CD4-positive, alpha-beta memory T cell (primary cell): ENCODE measurements at regions of chr2 and their contacts with region 1.

Region 1: GRCh38 chr2:178414266-178415247 is 36.4 kb downstream of the PRKRA start:
- DNase-seq: peak; percentile 61 to 79 (median 71)
- H3K4me3 ChIP-seq: peak overlapping the region; percentile 80 to 86
- H3K4me3 Mint-ChIP-seq: peak overlapping the region; percentile 86 to 97 (median 92)
- H3K27ac ChIP-seq: peak overlapping the region; percentile 69
- H3K27ac Mint-ChIP-seq: peak overlapping the region; percentile 87 to 99 (median 97)
- H3K4me1 ChIP-seq: peaks cover 15% of the 10 kb centered on the region
- H3K4me1 Mint-ChIP-seq: peaks cover 11 to 32% (median 19%) of the 10 kb centered on the region in 4 donors
- H3K27me3 ChIP-seq: no peaks in the 10 kb centered on the region
- H3K27me3 Mint-ChIP-seq: peaks cover 0 to 3% of the 10 kb centered on the region in 2 donors

Region 2: DNA sequence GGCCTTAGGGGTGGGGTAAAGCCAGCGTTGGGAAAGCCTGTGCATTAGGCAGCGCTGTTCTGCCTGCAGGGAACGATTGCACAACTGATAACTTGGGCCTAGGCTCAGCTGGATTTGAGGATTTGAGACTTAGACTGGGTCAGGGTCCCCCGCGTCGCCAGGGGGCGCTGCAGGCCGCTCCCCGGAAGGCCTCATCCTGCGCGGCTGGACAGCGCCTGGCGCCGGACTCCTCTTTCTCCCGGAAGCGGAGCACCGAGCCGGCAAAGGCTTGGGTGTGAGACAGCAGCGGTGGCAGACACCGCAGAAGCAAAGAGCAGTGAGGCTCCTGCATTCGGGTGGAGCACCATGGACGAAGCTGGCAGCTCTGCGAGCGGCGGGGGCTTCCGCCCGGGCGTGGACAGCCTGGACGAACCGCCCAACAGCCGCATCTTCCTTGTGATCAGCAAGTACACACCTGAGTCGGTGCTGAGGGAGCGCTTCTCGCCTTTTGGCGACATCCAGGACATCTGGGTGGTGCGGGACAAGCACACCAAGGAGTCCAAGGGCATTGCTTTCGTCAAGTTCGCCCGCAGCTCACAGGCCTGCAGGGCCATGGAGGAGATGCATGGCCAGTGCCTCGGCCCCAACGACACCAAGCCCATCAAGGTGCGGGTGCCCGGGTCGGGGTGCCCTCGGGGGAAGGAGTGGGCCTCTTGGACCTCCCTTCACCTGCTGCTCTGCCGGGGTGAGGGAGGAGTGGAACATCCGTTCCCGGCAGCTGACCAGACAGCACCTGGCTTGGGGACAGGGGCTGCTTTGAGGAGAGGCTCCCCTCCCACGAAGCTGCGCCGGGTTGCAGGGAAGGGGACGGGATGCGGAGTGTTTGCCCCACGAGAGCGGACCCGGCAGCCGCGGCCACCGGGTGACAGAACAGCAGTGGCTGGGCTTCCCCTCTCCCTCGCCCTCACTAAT is 302.1 kb before region 1 on chr2 and contains the start of gene RBM45:
- CTCF ChIA-PET with region 1: interaction called, 16 read pairs
- POLR2A ChIA-PET with region 1: interaction called, 3 read pairs
- intact Hi-C with region 1: loop called (anchors 1 kb)
- DNase-seq: peak; percentile 76 to 82 (median 82)
- H3K4me3 ChIP-seq: peak within 1 kb of the TSS; percentile 80 to 92
- H3K4me3 Mint-ChIP-seq: peak within 1 kb of the TSS; percentile 87 to 96 (median 91)
- H3K27ac ChIP-seq: peak within 1 kb of the TSS; percentile 66
- H3K27ac Mint-ChIP-seq: peak within 1 kb of the TSS; percentile 82 to 95 (median 90)
- H3K4me1 ChIP-seq: peaks cover 28% of the 10 kb centered on the region
- H3K4me1 Mint-ChIP-seq: peaks cover 28 to 47% (median 39%) of the 10 kb centered on the region in 4 donors
- H3K27me3 ChIP-seq: no peaks in the 10 kb centered on the region
- H3K27me3 Mint-ChIP-seq: no peaks in the 10 kb centered on the region
- total RNA-seq, gene RBM45: 23.3 to 28.0 TPM

Region 3: GRCh38 chr2:178345951-178346350 is 68.6 kb before region 1 on chr2:
- CTCF ChIA-PET with region 1: no interaction called
- POLR2A ChIA-PET with region 1: no interaction called
- intact Hi-C with region 1: no loop called
- DNase-seq: no peak
- H3K4me3 ChIP-seq: no peak overlapping the region
- H3K4me3 Mint-ChIP-seq: no peak overlapping the region
- H3K27ac ChIP-seq: no peak overlapping the region
- H3K27ac Mint-ChIP-seq: no peak overlapping the region
- H3K4me1 ChIP-seq: no peaks in the 10 kb centered on the region
- H3K4me1 Mint-ChIP-seq: no peaks in the 10 kb centered on the region
- H3K27me3 ChIP-seq: no peaks in the 10 kb centered on the region
- H3K27me3 Mint-ChIP-seq: peaks cover 24 to 32% of the 10 kb centered on the region in 2 donors

Region 4: DNA sequence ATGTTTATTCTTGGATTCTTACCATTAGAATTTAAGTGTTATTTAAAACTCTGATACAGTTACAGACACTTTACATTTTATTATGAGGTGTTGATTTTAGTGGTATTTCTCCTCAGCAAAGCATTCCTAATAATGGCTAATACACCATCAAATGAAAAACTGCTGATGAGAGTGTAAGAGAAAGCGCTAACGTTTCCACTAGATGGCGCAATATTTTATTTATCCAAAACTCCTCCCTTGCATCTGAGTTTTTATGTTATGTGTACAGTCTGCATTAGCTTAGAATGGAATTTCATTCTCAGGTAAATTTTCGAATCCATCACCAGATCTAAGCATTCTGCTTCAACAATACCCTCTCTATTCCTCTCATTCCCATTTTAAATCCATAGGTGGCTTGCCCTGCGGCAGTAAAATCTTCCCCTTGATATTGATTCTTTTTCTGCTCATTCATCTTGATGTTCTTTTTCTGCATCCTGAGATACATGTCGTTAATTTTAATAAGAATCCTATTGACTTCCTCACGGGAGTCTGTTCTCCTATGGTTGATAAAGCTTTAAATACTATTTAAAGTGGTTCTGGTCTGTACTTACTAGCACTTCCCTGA is 17.5 kb before region 1 on chr2:
- CTCF ChIA-PET with region 1: interaction called, 256 read pairs
- POLR2A ChIA-PET with region 1: interaction called, 9 read pairs
- intact Hi-C with region 1: loop called (anchors 1 kb)
- DNase-seq: peak in 4 of 5 donors; percentile 32 to 47 (median 37)
- H3K4me3 ChIP-seq: no peak overlapping the region
- H3K4me3 Mint-ChIP-seq: no peak overlapping the region
- H3K27ac ChIP-seq: no peak overlapping the region
- H3K27ac Mint-ChIP-seq: no peak overlapping the region
- H3K4me1 ChIP-seq: no peaks in the 10 kb centered on the region
- H3K4me1 Mint-ChIP-seq: no peaks in the 10 kb centered on the region
- H3K27me3 ChIP-seq: no peaks in the 10 kb centered on the region
- H3K27me3 Mint-ChIP-seq: peaks cover 0 to 3% of the 10 kb centered on the region in 2 donors

Region 5: GRCh38 chr2:178450774-178451525 is 36.4 kb after region 1 on chr2 and contains the starts of genes PJVK and PRKRA:
- CTCF ChIA-PET with region 1: interaction called, 42 read pairs
- POLR2A ChIA-PET with region 1: interaction called, 56 read pairs
- intact Hi-C with region 1: loop called (anchors 1 kb)
- DNase-seq: peak; percentile 93 to 95 (median 94)
- H3K4me3 ChIP-seq: peak within 1 kb of the TSS; percentile 40 to 76
- H3K4me3 Mint-ChIP-seq: peak within 1 kb of the TSS; percentile 87 to 93 (median 90)
- H3K27ac ChIP-seq: peak within 1 kb of the TSS; percentile 97
- H3K27ac Mint-ChIP-seq: peak within 1 kb of the TSS; percentile 94 to 97 (median 97)
- H3K4me1 ChIP-seq: peaks cover 32% of the 10 kb centered on the region
- H3K4me1 Mint-ChIP-seq: peaks cover 21 to 34% (median 27%) of the 10 kb centered on the region in 4 donors
- H3K27me3 ChIP-seq: no peaks in the 10 kb centered on the region
- H3K27me3 Mint-ChIP-seq: peaks cover 2 to 3% of the 10 kb centered on the region in 2 donors
- total RNA-seq, gene PJVK: 3.6 to 4.1 TPM
- total RNA-seq, gene PRKRA: 51.0 to 52.4 TPM

Region 6: GRCh38 chr2:178522950-178523595 is 108.5 kb after region 1 on chr2:
- CTCF ChIA-PET with region 1: interaction called, 3 read pairs
- POLR2A ChIA-PET with region 1: interaction called, 4 read pairs
- intact Hi-C with region 1: loop called (anchors 1 kb)
- DNase-seq: peak; percentile 77 to 89 (median 83)
- H3K4me3 ChIP-seq: peak overlapping the region; percentile 63 to 90
- H3K4me3 Mint-ChIP-seq: peak overlapping the region; percentile 91 to 96 (median 93)
- H3K27ac ChIP-seq: peak overlapping the region; percentile 70
- H3K27ac Mint-ChIP-seq: peak overlapping the region; percentile 79 to 94 (median 93)
- H3K4me1 ChIP-seq: peaks cover 24% of the 10 kb centered on the region
- H3K4me1 Mint-ChIP-seq: peaks cover 25 to 61% (median 37%) of the 10 kb centered on the region in 4 donors
- H3K27me3 ChIP-seq: no peaks in the 10 kb centered on the region
- H3K27me3 Mint-ChIP-seq: no peaks in the 10 kb centered on the region